ENCODE measurements at regions of chr3 and their contacts with region 1.

Region 1: GRCh38 chr3:186930641-186931531 is 560 bp downstream of the ST6GAL1 start:
- DNase-seq: peak; percentile 90
- H3K4me3 ChIP-seq: peak overlapping the region; percentile 95
- H3K27ac ChIP-seq: peak overlapping the region; percentile 90
- H3K4me1 ChIP-seq: peaks cover 7% of the 10 kb centered on the region
- H3K27me3 ChIP-seq: no peaks in the 10 kb centered on the region
- CTCF ChIP-seq: peak; percentile 40

Region 2: GRCh38 chr3:186849374-186849975 is 81.4 kb before region 1 on chr3:
- CTCF ChIA-PET with region 1: interaction called, 10 read pairs
- POLR2A ChIA-PET with region 1: no interaction called
- intact Hi-C with region 1: no loop called
- DNase-seq: peak; percentile 67
- H3K4me3 ChIP-seq: no peak overlapping the region
- H3K27ac ChIP-seq: no peak overlapping the region
- H3K4me1 ChIP-seq: peaks cover 22% of the 10 kb centered on the region
- H3K27me3 ChIP-seq: no peaks in the 10 kb centered on the region
- CTCF ChIP-seq: peak; percentile 71

Region 3: DNA sequence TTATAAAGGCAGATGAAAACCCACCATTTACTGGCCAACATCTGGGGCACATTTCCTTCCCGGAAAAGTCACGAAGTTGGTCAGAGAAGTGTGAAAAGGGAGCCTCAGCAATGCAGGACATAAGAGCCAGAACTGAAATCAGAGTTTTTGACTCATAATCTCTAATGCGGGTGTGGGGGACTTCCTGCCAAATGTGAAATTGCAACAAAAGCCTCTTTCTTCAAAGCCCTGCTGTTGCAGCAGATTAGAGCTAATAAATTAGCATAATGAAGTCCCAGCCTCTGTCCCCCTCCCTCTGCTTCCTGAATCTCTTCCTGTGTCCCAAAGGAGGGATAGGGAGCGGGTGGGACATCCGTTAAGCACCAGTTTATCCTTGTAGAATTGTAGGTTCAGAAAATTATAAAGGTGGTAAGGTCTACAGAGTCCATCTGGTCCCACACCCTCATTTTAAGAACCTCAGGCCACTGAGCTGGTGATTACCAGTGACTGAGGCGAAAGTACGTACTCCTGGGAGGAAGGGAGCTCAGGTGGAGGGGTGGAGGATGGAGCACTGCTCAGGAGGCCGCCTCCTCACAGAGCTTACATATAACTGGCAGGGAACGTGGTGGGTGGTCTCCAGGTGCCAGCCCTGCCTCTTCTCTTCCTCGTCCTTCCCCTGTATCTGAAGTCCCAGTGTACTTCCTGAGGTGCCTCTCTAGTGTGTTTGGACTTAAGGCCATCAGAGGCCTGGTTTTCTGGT is 34.4 kb after region 1 on chr3:
- CTCF ChIA-PET with region 1: no interaction called
- POLR2A ChIA-PET with region 1: no interaction called
- intact Hi-C with region 1: loop called (anchors 2 kb)
- DNase-seq: peak; percentile 97
- H3K4me3 ChIP-seq: peak overlapping the region; percentile 23
- H3K27ac ChIP-seq: peak overlapping the region; percentile 94
- H3K4me1 ChIP-seq: peaks cover 62% of the 10 kb centered on the region
- H3K27me3 ChIP-seq: no peaks in the 10 kb centered on the region
- CTCF ChIP-seq: no peak

Measured in A673 (cell line).